Naive thymus-derived CD8-positive, alpha-beta T cell (primary cell): ENCODE measurements at regions of chr14 and their contacts with region 1.

Region 1: DNA sequence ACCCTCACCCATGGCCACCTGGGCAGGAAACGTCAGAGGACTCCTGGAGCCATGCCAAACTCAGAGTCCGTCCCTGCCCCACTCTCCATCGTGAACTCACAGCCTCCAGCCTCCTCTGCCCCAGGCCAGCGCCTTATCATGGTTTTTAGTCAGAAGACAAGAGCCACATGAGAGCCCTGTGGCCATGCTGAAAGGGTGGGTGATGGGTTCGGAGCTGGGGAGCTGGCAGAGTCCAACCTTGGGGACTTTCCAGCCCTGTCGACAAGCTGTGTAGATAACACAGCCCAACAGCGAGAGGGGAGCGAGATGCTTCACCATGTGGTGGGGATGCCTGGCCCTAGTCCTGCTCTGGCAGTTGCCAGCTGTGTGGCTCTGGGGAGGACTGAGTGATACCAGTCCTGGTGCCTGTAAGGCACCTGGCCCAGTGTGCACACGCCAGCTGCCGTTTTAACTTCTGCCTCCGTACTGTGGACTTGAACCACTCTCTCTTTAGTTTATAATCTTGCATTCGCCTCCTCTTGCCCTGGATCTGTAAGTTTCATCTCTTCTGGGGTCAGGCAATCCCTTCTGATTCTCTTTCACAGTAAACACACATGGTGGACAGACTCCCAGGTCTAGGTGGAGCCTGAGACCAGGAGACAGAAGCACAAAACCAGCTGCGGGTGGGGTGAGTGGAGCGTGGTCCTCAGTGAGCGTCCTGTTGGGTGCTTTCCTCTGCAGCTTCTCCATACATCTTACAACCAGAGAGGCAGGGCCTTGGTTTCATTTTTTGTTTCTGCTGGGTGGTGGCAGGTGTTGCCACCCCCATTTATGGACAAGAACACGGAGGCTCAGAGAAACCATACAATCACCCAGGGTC is 55.3 kb downstream of the RIN3 start:
- DNase-seq: peak in 7 of 10 donors; percentile 21 to 66 (median 45)
- ATAC-seq: peak; percentile 84 to 87
- H3K4me3 Mint-ChIP-seq: peak overlapping the region; percentile 68 to 92 (median 86)
- H3K27ac Mint-ChIP-seq: peak overlapping the region; percentile 96 to 100 (median 99)
- H3K4me1 Mint-ChIP-seq: peaks cover 24 to 74% (median 69%) of the 10 kb centered on the region in 4 donors
- H3K27me3 Mint-ChIP-seq: no peaks in the 10 kb centered on the region

Region 2: DNA sequence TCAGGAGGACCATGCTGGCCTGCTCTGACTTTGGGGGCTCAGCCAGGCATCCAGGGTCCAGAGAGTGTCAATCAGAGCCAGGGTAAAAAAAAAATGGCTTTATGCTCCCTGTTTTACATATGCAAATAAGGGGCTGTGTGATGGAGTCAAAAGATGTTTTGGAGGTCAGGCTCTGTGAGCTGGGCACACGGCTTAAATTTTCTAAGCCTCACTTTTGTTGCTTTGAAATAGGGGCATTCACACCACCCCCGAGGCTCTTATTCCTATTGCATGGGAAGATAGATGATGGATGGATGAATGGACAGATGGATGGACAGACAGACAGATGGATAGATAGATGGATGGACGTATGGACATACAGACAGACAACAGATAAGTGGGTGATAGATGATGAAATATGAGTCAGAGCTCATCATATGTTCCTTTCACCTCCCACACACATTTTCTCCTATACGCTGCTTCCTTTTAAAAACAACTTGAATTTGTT is 12.6 kb before region 1 on chr14:
- POLR2A ChIA-PET with region 1: interaction called, 18 read pairs
- DNase-seq: no peak
- ATAC-seq: peak; percentile 12 to 24
- H3K4me3 Mint-ChIP-seq: peak overlapping the region in 9 of 10 donors; percentile 11 to 78 (median 69)
- H3K27ac Mint-ChIP-seq: peak overlapping the region; percentile 45 to 92 (median 84)
- H3K4me1 Mint-ChIP-seq: peaks cover 32 to 80% (median 77%) of the 10 kb centered on the region in 4 donors
- H3K27me3 Mint-ChIP-seq: no peaks in the 10 kb centered on the region

Region 3: DNA sequence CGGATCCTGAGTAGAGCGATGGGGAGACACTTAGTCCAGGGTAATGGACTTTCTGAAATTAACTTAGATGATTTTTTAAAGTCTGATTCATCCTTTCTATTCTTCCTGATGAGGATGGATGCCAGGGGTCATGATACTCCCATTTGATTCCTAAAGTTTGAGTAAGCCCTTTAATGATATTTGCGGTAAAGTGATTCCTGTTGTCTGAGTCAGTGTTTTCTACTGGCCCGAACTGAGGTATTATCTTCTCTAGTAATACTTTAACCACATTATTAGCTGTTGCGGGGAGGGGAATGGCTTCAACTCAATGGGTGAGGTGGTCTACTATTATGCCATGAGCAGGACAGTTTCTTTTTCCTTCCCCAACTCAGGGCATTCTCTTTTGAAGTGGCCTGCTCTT is 56.4 kb after region 1 on chr14:
- POLR2A ChIA-PET with region 1: no interaction called
- DNase-seq: no peak
- ATAC-seq: no peak
- H3K4me3 Mint-ChIP-seq: no peak overlapping the region
- H3K27ac Mint-ChIP-seq: peak overlapping the region in 1 of 10 donors; percentile 46
- H3K4me1 Mint-ChIP-seq: peaks cover 3 to 12% (median 10%) of the 10 kb centered on the region in 4 donors
- H3K27me3 Mint-ChIP-seq: no peaks in the 10 kb centered on the region

Region 4: GRCh38 chr14:92800525-92800924 is 231.7 kb after region 1 on chr14:
- POLR2A ChIA-PET with region 1: no interaction called
- DNase-seq: no peak
- ATAC-seq: no peak
- H3K4me3 Mint-ChIP-seq: peak overlapping the region in 9 of 10 donors; percentile 16 to 77 (median 59)
- H3K27ac Mint-ChIP-seq: peak overlapping the region in 1 of 10 donors; percentile 38
- H3K4me1 Mint-ChIP-seq: peaks cover 25 to 73% (median 72%) of the 10 kb centered on the region in 4 donors
- H3K27me3 Mint-ChIP-seq: no peaks in the 10 kb centered on the region